ENCODE measurements at regions of chr5 and their contacts with region 1.

Region 1: DNA sequence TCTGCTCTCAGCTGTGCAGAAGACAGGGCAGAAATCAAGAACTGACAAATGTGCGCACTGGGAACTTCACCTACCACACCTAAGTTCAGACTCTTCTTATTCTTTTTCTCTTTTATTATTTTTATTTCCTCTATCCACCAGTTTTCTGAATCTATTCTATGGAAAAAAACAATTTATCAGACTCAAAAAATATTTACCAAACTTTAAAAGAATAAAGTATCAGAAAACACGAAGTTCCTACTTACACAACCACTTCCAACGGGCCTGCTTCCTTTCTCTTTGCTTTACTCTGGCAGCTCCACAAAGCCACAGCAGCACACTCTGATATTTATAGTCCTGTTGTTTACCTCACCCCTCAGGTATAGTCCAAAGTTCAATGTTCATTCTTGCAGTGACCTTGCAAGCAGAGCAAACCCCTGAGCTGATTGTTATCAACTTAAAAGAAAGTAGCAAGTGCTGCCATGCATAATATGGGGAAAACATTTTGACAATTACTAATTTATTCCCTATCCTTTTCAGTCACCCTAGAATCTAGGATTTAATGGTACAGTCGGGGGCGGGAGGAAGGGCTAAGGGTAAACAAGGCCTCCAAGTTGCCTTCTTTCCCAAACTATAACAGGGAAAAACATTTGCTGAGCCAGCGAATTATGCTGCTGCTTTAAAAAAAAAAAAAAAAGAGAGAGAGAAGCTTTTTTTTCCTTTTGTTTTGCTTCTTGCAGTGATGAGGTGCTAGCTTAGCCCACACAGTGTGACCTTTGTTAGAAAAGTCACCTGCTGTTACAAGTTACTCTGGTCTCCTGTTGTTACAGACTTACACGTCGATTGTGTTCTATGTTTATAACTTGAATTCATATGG is at the start of gene SELENOP:
- DNase-seq: peak; percentile 67 to 84 (median 72)
- H3K4me3 ChIP-seq: peak within 1 kb of the TSS; percentile 47
- H3K27ac ChIP-seq: peak within 1 kb of the TSS; percentile 70 to 84
- H3K4me1 ChIP-seq: peaks cover 3% of the 10 kb centered on the region
- H3K27me3 ChIP-seq: no peaks in the 10 kb centered on the region
- CTCF ChIP-seq: no peak
- EP300 ChIP-seq: no peak
- POLR2A ChIP-seq: peak; percentile 86
- total RNA-seq, gene SELENOP: 339 to 764 (median 590) TPM

Region 2: GRCh38 chr5:42591015-42591414 is 220.8 kb before region 1 on chr5:
- intact Hi-C with region 1: no loop called
- DNase-seq: peak in 3 of 5 donors; percentile 36 to 62 (median 56)
- H3K4me3 ChIP-seq: no peak overlapping the region
- H3K27ac ChIP-seq: no peak overlapping the region
- H3K4me1 ChIP-seq: peaks cover 14% of the 10 kb centered on the region
- H3K27me3 ChIP-seq: no peaks in the 10 kb centered on the region
- CTCF ChIP-seq: no peak
- EP300 ChIP-seq: no peak
- POLR2A ChIP-seq: no peak

Region 3: GRCh38 chr5:42779083-42779482 is 32.7 kb before region 1 on chr5:
- intact Hi-C with region 1: no loop called
- DNase-seq: no peak
- H3K4me3 ChIP-seq: no peak overlapping the region
- H3K27ac ChIP-seq: no peak overlapping the region
- H3K4me1 ChIP-seq: no peaks in the 10 kb centered on the region
- H3K27me3 ChIP-seq: no peaks in the 10 kb centered on the region
- CTCF ChIP-seq: no peak
- EP300 ChIP-seq: no peak
- POLR2A ChIP-seq: no peak

Region 4: GRCh38 chr5:42889311-42889933 is 77.6 kb after region 1 on chr5:
- intact Hi-C with region 1: loop called in 2 of 4 experiments (anchors 10 kb)
- DNase-seq: peak; percentile 69 to 85 (median 77)
- H3K4me3 ChIP-seq: no peak overlapping the region
- H3K27ac ChIP-seq: no peak overlapping the region
- H3K4me1 ChIP-seq: no peaks in the 10 kb centered on the region
- H3K27me3 ChIP-seq: no peaks in the 10 kb centered on the region
- CTCF ChIP-seq: peak; percentile 73 to 87 (median 74)
- EP300 ChIP-seq: no peak
- POLR2A ChIP-seq: no peak

Region 5: GRCh38 chr5:43484106-43484849 is 672.5 kb after region 1 on chr5:
- intact Hi-C with region 1: loop called in 1 of 4 experiments (anchors 10 kb)
- DNase-seq: peak; percentile 77 to 85 (median 82)
- H3K4me3 ChIP-seq: peak overlapping the region; percentile 83
- H3K27ac ChIP-seq: peak overlapping the region; percentile 88 to 94
- H3K4me1 ChIP-seq: peaks cover 3% of the 10 kb centered on the region
- H3K27me3 ChIP-seq: no peaks in the 10 kb centered on the region
- CTCF ChIP-seq: peak; percentile 62 to 69 (median 65)
- EP300 ChIP-seq: no peak
- POLR2A ChIP-seq: no peak

Measured in ovary (tissue), 10 donors.